ENCODE measurements at regions of chr11 and their contacts with region 1.

Region 1: DNA sequence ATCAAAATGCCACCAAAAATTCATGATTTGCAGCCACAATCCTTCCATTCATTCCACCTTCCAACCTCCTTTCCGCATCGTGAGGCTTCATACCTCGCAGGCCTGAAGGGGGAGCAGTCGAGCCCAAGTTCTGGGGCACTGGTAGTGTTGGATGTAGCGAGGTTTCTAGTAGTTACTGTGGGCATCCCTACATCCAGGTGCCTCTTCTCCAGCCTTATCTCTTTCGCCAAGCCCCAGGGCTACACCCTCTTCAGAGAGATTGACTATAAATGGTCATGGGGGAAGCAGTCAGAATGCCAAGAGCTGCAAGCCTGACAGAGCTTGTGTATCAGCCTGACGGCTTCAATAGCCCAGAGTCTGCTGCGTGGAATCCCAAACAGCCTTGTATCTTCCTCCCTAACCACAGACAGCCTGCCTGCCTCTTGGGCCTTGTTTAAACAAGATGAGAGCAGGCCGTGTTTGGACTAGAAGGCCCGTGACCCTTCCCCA is 28.9 kb downstream of the CLMP start:
- DNase-seq: peak; percentile 79 to 84
- H3K4me3 ChIP-seq: no peak overlapping the region
- H3K4me3 Mint-ChIP-seq: no peak overlapping the region
- H3K27ac Mint-ChIP-seq: peak overlapping the region; percentile 33
- H3K4me1 ChIP-seq: no peaks in the 10 kb centered on the region
- H3K4me1 Mint-ChIP-seq: peaks cover 10% of the 10 kb centered on the region
- H3K27me3 ChIP-seq: no peaks in the 10 kb centered on the region
- H3K27me3 Mint-ChIP-seq: no peaks in the 10 kb centered on the region
- CTCF ChIP-seq: peak; percentile 80 to 90

Region 2: DNA sequence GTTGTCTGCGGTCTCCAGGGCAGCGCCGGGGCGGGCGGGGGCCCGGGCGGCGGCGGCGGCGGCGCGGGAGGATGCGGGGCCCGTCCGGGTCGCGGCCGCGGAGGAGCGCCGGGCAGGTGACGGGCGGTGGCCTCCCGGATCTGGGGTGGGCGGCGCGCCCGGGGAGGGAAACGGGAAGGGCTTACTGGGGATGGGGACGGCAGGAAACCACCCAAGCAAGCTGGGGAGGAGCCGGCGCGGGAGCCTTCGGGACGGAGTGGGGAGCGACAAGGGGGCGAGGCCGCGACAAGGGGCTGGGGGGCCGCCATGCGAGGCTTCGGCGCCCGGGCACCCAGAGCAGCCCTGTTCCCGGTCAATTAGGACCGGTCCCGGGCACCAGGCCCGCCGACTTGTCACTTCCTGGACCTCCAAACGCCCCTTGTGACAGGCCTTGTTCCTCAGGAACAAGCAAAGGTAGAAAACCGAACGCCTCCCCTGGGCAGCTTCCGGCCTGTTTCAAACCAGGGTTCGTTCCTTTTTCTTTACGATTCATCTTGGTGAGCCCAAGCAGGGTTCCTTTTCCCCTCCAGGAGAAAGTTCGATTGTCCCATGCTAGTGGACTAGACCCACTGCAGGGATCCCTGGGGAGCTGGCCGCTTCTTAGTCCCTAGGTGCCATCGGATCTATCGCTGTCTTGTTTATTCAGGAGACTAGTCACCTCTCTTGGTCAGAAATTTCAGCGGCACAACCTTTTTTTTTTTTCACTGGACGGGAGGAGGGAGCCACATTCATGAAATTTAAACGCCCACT is 283.1 kb before region 1 on chr11:
- CTCF ChIA-PET with region 1: no interaction called
- POLR2A ChIA-PET with region 1: no interaction called
- intact Hi-C with region 1: no loop called
- DNase-seq: peak; percentile 51 to 68
- H3K4me3 ChIP-seq: peak overlapping the region; percentile 56
- H3K4me3 Mint-ChIP-seq: peak overlapping the region; percentile 85
- H3K27ac Mint-ChIP-seq: peak overlapping the region; percentile 71
- H3K4me1 ChIP-seq: peaks cover 4% of the 10 kb centered on the region; the same call in 1 of the 2 replicates
- H3K4me1 Mint-ChIP-seq: no peaks in the 10 kb centered on the region
- H3K27me3 ChIP-seq: 0 out of 2 replicates have a peak, but pooled peaks cover 1% of the 10 kb centered on the region
- H3K27me3 Mint-ChIP-seq: peaks cover 44% of the 10 kb centered on the region
- CTCF ChIP-seq: no peak

Region 3: GRCh38 chr11:123110356-123110755 is 55.8 kb before region 1 on chr11:
- CTCF ChIA-PET with region 1: interaction called, 3 read pairs
- POLR2A ChIA-PET with region 1: no interaction called
- intact Hi-C with region 1: loop called (anchors 2 kb)
- DNase-seq: no peak
- H3K4me3 ChIP-seq: no peak overlapping the region
- H3K4me3 Mint-ChIP-seq: no peak overlapping the region
- H3K27ac Mint-ChIP-seq: no peak overlapping the region
- H3K4me1 ChIP-seq: peaks cover 13% of the 10 kb centered on the region
- H3K4me1 Mint-ChIP-seq: peaks cover 13% of the 10 kb centered on the region
- H3K27me3 ChIP-seq: no peaks in the 10 kb centered on the region
- H3K27me3 Mint-ChIP-seq: no peaks in the 10 kb centered on the region
- CTCF ChIP-seq: no peak